CD8-positive, alpha-beta memory T cell (primary cell): ENCODE measurements at regions of chr18 and their contacts with region 1.

Region 1: DNA sequence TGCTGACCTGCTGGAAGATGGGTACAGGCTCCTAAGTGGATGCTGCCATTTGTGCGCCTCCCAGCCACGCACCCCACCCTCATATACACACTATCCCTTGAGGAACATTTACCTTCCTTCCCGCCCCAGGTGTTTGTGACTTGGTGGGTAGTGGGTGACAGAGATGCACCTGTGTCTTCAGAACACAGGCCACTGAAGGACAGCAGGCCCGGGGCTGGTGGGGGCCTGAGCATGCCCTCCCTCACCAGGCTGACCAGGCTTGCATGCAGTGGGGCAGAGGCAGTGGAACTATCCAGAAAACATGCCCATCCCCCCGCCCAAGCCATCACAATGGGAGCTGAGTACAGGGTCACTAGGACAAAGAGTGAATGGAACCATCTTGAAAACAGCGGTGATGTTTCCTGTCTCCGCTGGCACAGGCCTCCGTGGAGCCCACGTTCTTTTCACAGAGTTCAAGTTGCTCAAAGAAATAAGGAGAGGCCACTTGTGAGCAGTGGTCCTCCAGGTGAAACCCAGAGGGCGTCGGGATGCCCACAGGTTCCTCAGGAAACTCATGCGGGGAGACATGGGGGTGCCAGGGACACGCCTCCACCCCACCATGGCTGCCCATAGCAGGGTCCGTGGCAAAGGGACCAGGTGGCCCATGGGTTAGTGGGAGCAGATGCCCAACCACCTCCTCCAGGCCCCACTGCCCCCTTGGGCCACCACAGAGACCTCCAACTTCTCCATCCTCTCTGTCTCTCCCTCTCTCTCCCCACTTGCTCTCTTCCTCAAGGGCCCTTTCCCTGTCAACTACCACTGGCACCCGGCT is 90.9 kb downstream of the MALT1 start:
- DNase-seq: no peak
- H3K4me3 ChIP-seq: no peak overlapping the region
- H3K4me3 Mint-ChIP-seq: peak overlapping the region in 1 of 7 donors; percentile 59
- H3K27ac ChIP-seq: no peak overlapping the region
- H3K27ac Mint-ChIP-seq: peak overlapping the region in 1 of 8 donors; percentile 36
- H3K4me1 ChIP-seq: peaks cover 17% of the 10 kb centered on the region
- H3K4me1 Mint-ChIP-seq: peaks cover 13 to 21% (median 20%) of the 10 kb centered on the region in 3 donors
- H3K27me3 ChIP-seq: no peaks in the 10 kb centered on the region
- H3K27me3 Mint-ChIP-seq: peaks cover 5 to 37% of the 10 kb centered on the region in 2 donors

Region 2: DNA sequence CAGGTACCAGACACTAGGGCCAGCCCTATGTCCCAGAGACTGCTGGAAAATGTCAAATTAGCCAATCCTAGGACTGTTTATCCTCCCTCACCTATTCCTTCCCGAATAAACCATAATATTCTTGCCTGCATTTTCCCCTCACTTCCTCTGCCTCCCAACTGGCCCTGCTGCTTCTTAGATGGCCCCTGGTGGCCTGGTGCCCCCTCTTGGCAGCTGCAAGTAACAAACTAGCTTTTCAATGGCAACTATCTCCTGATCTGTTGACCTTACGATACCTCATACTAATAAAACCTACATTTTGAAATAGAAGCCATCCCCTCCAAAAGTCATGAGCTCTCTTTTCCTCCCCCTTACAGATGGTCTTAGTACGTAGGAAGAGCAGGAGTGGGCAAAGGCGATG is 265.2 kb before region 1 on chr18:
- CTCF ChIA-PET with region 1: interaction called, 18 read pairs
- POLR2A ChIA-PET with region 1: no interaction called
- DNase-seq: no peak
- H3K4me3 ChIP-seq: no peak overlapping the region
- H3K4me3 Mint-ChIP-seq: no peak overlapping the region
- H3K27ac ChIP-seq: no peak overlapping the region
- H3K27ac Mint-ChIP-seq: no peak overlapping the region
- H3K4me1 ChIP-seq: peaks cover 9% of the 10 kb centered on the region
- H3K4me1 Mint-ChIP-seq: peaks cover 11 to 18% (median 16%) of the 10 kb centered on the region in 3 donors
- H3K27me3 ChIP-seq: no peaks in the 10 kb centered on the region
- H3K27me3 Mint-ChIP-seq: peaks cover 17 to 52% of the 10 kb centered on the region in 2 donors

Region 3: GRCh38 chr18:58541789-58542425 is 220.3 kb before region 1 on chr18:
- CTCF ChIA-PET with region 1: interaction called, 21 read pairs
- POLR2A ChIA-PET with region 1: no interaction called
- DNase-seq: peak in 4 of 5 donors; percentile 10 to 70 (median 36)
- H3K4me3 ChIP-seq: no peak overlapping the region
- H3K4me3 Mint-ChIP-seq: peak overlapping the region in 3 of 7 donors; percentile 6 to 35 (median 27)
- H3K27ac ChIP-seq: no peak overlapping the region
- H3K27ac Mint-ChIP-seq: peak overlapping the region in 7 of 8 donors; percentile 4 to 90 (median 47)
- H3K4me1 ChIP-seq: peaks cover 16% of the 10 kb centered on the region
- H3K4me1 Mint-ChIP-seq: peaks cover 14 to 29% (median 22%) of the 10 kb centered on the region in 3 donors
- H3K27me3 ChIP-seq: no peaks in the 10 kb centered on the region
- H3K27me3 Mint-ChIP-seq: peaks cover under 1 to 3% of the 10 kb centered on the region in 2 donors

Region 4: GRCh38 chr18:58776084-58776483 is 13.9 kb after region 1 on chr18:
- CTCF ChIA-PET with region 1: interaction called, 20 read pairs
- POLR2A ChIA-PET with region 1: no interaction called
- DNase-seq: no peak
- H3K4me3 ChIP-seq: no peak overlapping the region
- H3K4me3 Mint-ChIP-seq: no peak overlapping the region
- H3K27ac ChIP-seq: no peak overlapping the region
- H3K27ac Mint-ChIP-seq: no peak overlapping the region
- H3K4me1 ChIP-seq: no peaks in the 10 kb centered on the region
- H3K4me1 Mint-ChIP-seq: no peaks in the 10 kb centered on the region
- H3K27me3 ChIP-seq: no peaks in the 10 kb centered on the region
- H3K27me3 Mint-ChIP-seq: peaks cover 10 to 39% of the 10 kb centered on the region in 2 donors